Activated CD4-positive, alpha-beta memory T cell treated with anti-CD3 and anti-CD28 coated beads for 36 hours (primary cell): ENCODE measurements at regions of chr11 and their contacts with region 1.

Region 1: DNA sequence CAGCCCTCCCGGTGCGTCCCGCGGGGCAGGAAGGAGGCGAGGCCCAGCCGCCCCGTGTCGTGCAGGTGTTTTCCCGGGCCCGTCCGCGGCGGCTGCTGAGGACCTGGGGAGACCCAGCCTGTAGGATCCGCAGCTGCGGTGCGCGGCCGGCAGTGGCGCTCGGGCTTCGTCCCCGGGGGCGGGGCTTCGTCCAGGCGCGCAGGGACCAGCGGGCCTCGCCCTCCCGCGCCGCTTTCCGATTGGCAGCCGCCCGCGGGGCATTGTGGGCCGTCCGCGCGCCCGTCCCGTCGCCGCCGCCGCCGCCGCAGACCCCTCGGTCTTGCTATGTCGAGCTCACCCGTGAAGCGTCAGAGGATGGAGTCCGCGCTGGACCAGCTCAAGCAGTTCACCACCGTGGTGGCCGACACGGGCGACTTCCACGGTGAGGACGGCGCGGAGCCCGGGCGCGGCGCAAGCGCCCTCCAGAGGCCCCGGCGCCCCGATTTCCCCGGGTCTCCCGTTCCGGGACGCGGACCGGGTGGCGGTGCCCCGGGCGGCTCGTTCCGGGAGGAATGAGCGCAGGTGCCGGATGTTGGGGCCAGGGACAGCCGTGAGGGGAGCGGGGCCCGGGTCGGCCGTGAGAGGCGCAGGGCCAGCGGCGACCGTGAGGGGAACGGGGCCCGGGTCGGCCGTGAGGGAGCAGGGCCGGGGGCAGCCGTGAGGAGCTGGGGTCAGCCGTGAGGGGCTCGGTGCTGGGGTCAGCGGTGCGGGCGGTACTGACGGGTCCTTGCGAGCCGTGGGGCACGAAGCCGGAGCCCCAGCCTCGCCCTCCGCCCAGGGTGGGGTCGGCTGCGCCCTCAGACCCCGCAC is at the start of gene TALDO1:
- DNase-seq: peak; percentile 92
- H3K4me3 Mint-ChIP-seq: peak within 1 kb of the TSS; percentile 81
- H3K27ac Mint-ChIP-seq: peak within 1 kb of the TSS; percentile 54
- H3K4me1 Mint-ChIP-seq: peaks cover 17% of the 10 kb centered on the region
- H3K27me3 Mint-ChIP-seq: no peaks in the 10 kb centered on the region
- total RNA-seq, gene TALDO1: 284 to 296 TPM

Region 2: GRCh38 chr11:689625-690024 is 57.8 kb before region 1 on chr11:
- CTCF ChIA-PET with region 1: no interaction called
- POLR2A ChIA-PET with region 1: no interaction called
- intact Hi-C with region 1: no loop called
- DNase-seq: no peak
- H3K4me3 Mint-ChIP-seq: no peak overlapping the region
- H3K27ac Mint-ChIP-seq: no peak overlapping the region
- H3K4me1 Mint-ChIP-seq: peaks cover 34% of the 10 kb centered on the region
- H3K27me3 Mint-ChIP-seq: no peaks in the 10 kb centered on the region

Region 3: DNA sequence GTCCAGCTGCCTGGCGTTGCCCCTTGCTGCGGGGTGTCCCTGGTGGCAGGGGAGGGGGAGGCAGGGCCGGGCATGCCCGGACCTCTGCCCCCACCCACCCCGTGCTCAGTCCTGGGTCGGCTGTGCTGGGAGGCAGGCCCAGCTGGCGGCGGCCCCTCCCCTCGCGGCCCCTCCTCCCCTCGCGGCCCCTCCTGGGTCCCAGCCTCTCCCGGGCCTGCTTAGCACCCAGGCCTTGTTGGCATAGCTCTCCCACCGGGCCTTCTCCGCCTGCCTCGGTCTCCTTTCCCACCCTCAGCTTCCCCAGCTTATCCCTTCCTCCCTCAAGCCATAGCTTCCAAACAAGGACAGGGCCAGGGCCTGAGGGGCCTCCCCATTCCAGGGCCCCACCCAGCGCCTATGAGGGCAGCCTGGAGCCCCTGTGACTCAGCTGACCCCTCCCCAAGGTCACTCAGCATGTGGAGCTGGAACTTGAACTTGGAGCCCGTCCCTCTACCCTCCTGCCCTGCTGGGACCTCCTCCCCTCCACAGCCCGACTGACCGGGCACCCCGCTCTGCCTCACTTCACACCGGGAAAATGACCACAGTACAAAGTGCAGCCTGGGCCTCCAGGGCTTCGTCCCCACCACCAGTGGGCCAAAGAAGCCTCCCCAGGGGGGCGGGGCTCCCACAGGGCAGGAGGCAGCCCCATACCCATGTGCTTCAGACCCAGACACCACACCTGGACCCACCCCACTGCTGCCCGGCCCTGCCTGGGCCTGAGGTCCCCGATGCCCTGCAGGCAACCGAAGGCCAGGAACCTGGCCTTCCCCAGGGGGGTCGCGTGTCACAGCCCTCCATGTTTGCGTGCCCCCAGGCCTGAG is 40.2 kb before region 1 on chr11:
- CTCF ChIA-PET with region 1: no interaction called
- POLR2A ChIA-PET with region 1: no interaction called
- intact Hi-C with region 1: no loop called
- DNase-seq: no peak
- H3K4me3 Mint-ChIP-seq: no peak overlapping the region
- H3K27ac Mint-ChIP-seq: no peak overlapping the region
- H3K4me1 Mint-ChIP-seq: peaks cover 5% of the 10 kb centered on the region
- H3K27me3 Mint-ChIP-seq: peaks cover 20% of the 10 kb centered on the region

Region 4: GRCh38 chr11:762421-763072 is 15.2 kb after region 1 on chr11:
- CTCF ChIA-PET with region 1: interaction called, 7 read pairs
- POLR2A ChIA-PET with region 1: interaction called, 13 read pairs
- intact Hi-C with region 1: no loop called
- DNase-seq: peak; percentile 30
- H3K4me3 Mint-ChIP-seq: no peak overlapping the region
- H3K27ac Mint-ChIP-seq: no peak overlapping the region
- H3K4me1 Mint-ChIP-seq: peaks cover 16% of the 10 kb centered on the region
- H3K27me3 Mint-ChIP-seq: no peaks in the 10 kb centered on the region